Endothelial cell of umbilical vein (primary cell): ENCODE measurements at regions of chr1 and their contacts with region 1.

Region 1: DNA sequence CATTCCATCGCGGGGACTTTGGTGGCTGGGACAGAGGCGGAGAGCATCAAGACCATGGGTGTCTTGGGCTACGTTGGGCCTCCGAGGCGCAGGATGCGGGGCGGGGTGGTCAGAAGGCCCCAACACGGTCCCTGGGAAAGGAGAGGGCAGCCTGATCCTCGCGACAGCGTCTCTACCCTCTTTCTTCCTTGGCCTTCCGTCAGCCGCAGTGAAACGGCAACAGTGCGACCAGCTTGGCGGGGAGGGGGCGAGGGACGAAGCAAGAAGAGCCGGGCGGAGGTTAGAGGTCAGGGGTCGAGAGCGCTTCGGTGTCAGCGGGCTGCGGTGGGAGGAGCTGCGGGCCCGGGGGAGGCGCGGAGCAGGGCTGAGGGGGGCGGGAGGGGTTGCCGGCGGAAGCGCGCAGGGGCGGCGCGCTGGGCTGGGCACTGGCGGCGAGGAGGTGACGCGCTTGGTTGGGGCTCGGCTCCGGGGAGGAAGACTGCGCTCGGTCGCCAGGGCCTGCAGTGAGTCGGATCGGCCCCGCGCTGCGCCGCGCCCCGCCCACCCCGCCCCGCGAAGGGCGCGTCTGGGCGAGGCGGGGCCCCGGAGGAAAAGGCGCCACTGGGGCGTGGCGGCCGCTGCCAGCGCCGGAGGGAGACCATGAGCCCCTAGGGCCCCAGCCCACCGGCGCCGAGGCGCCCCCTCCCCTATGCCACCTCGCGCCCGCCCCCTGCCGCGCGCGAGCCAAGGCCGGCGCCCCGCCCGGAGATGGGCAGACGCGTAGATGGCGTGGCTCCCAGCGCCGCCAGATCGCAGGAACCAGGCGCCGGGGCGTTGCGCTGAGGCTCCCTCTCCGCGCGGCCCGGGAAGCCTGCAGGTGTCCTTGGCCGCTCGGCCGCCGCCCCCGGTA is at the start of gene KCNC4:
- DNase-seq: peak; percentile 81
- H3K4me3 ChIP-seq: peak within 1 kb of the TSS; percentile 43 to 65 (median 61)
- H3K27ac ChIP-seq: no peak within 1 kb of the TSS
- H3K4me1 ChIP-seq: peaks cover 5% of the 10 kb centered on the region
- H3K27me3 ChIP-seq: peaks cover 0 to 6% of the 10 kb centered on the region in 2 experiments
- CTCF ChIP-seq: no peak
- POLR2A ChIP-seq: no peak
- total RNA-seq, gene KCNC4: 12.3 and 22.5 TPM in 2 replicates

Region 2: GRCh38 chr1:110155878-110156522 is 54.0 kb before region 1 on chr1:
- CTCF ChIA-PET with region 1: no interaction called
- POLR2A ChIA-PET with region 1: no interaction called
- dilution Hi-C with region 1: no loop called
- intact Hi-C with region 1: no loop called
- DNase-seq: peak; percentile 56
- H3K4me3 ChIP-seq: no peak overlapping the region
- H3K27ac ChIP-seq: no peak overlapping the region
- H3K4me1 ChIP-seq: no peaks in the 10 kb centered on the region
- H3K27me3 ChIP-seq: peaks cover 12 to 21% of the 10 kb centered on the region in 2 experiments
- CTCF ChIP-seq: no peak
- POLR2A ChIP-seq: no peak

Region 3: GRCh38 chr1:110235834-110236682 is 26.1 kb after region 1 on chr1:
- CTCF ChIA-PET with region 1: interaction called, 22 read pairs
- POLR2A ChIA-PET with region 1: interaction called, 3 read pairs
- dilution Hi-C with region 1: no loop called
- intact Hi-C with region 1: loop called (anchors 1 kb)
- DNase-seq: peak; percentile 86
- H3K4me3 ChIP-seq: no peak overlapping the region
- H3K27ac ChIP-seq: peak overlapping the region; percentile 77
- H3K4me1 ChIP-seq: peaks cover 36% of the 10 kb centered on the region
- H3K27me3 ChIP-seq: no peaks in the 10 kb centered on the region
- CTCF ChIP-seq: no peak
- POLR2A ChIP-seq: no peak

Region 4: DNA sequence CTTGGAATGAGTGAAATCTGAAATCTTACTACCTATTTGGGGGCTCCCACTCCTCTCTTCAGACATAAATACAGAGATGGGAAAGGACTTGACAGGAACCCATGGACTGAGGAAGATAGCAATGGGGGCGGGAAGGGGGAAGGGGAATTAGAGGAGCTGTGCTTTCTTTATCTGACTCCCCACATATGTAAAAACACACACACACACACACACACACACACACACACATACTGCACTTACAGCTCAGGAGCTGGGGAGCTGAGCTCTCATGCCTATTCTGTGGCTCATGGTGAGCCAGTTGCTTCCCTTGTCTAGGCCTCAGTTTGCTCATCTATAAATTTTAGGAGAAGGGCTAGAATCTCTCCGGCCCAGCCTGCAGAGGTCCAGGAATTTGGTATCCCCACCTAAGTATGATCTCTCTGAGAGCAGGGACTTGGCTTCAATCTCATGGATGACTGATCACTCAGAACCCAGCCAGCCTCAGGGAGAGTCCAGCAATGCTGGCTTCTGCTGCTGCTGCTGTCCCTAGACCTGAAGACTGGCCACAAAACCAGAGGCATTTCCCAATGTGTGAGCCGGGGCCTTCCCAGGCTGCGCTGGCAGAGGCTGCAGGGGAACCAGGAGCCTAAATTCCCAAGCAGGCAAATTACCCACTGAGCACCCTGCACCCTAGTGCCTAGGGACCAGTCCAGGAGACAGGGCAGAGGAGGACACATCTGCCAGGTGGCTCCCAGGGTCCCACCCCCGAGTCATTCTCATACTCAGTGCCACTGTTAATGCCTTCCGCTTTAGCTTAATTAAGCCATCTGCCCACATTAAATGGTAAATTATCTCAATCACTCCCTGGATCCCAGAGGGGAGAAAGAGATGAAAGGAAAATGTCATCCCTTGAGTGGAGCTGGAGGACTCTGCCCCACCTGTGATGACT is 71.7 kb after region 1 on chr1:
- CTCF ChIA-PET with region 1: interaction called, 15 read pairs
- POLR2A ChIA-PET with region 1: no interaction called
- dilution Hi-C with region 1: no loop called
- intact Hi-C with region 1: no loop called
- DNase-seq: no peak
- H3K4me3 ChIP-seq: no peak overlapping the region
- H3K27ac ChIP-seq: no peak overlapping the region
- H3K4me1 ChIP-seq: no peaks in the 10 kb centered on the region
- H3K27me3 ChIP-seq: peaks cover 6 to 7% of the 10 kb centered on the region in 2 experiments
- CTCF ChIP-seq: no peak
- POLR2A ChIP-seq: no peak

Region 5: GRCh38 chr1:110319332-110320152 is 109.6 kb after region 1 on chr1:
- CTCF ChIA-PET with region 1: interaction called, 1,577 read pairs
- POLR2A ChIA-PET with region 1: no interaction called
- dilution Hi-C with region 1: no loop called
- intact Hi-C with region 1: no loop called
- DNase-seq: no peak
- H3K4me3 ChIP-seq: no peak overlapping the region
- H3K27ac ChIP-seq: no peak overlapping the region
- H3K4me1 ChIP-seq: no peaks in the 10 kb centered on the region
- H3K27me3 ChIP-seq: no peaks in the 10 kb centered on the region
- CTCF ChIP-seq: no peak
- POLR2A ChIP-seq: no peak

Region 6: DNA sequence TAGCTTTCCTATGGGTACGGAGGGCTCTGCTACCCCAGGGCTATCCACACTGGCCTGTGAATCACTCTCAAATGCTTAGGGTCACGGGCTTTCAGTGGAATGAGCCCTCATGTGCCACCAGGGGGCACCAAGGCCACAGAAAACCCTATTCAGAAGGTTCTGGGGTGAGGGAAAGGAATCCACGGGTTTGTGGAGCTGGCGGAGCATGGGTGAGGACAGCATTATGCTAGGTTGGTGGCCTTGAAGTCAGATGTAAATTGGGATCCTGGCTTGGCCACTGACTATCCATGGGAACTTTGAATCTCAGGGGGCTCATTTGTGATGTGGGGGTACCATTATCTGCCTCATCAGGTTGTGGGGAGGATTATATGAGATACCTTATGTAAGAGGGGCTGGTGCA is 202.6 kb after region 1 on chr1:
- CTCF ChIA-PET with region 1: interaction called, 22 read pairs
- POLR2A ChIA-PET with region 1: no interaction called
- dilution Hi-C with region 1: no loop called
- intact Hi-C with region 1: no loop called
- DNase-seq: peak; percentile 53
- H3K4me3 ChIP-seq: no peak overlapping the region
- H3K27ac ChIP-seq: no peak overlapping the region
- H3K4me1 ChIP-seq: peaks cover 4% of the 10 kb centered on the region
- H3K27me3 ChIP-seq: peaks cover 7 to 8% of the 10 kb centered on the region in 2 experiments
- CTCF ChIP-seq: peak; percentile 74 to 76
- POLR2A ChIP-seq: no peak

Region 7: DNA sequence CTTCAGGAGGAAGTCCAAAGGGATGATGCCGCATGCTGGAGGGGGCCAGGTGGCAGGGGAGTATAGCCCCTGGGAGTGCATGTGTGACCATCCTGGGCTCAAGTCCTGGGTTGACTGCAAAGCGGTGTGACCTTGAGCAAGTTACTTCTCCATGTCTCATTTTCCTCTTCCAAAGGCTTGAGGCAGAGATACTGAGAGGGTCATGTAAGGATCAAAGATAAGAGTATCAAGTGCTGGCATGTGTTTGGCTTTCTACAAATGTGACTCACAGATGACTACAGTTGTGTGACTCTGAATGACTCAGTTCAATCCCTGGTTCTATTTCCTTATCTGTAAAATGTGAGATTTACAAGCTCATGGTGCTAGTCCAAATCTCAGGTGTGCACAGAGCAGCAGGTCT is 267.1 kb after region 1 on chr1:
- CTCF ChIA-PET with region 1: interaction called, 10 read pairs
- POLR2A ChIA-PET with region 1: no interaction called
- dilution Hi-C with region 1: no loop called
- intact Hi-C with region 1: no loop called
- DNase-seq: peak; percentile 62
- H3K4me3 ChIP-seq: no peak overlapping the region
- H3K27ac ChIP-seq: no peak overlapping the region
- H3K4me1 ChIP-seq: peaks cover 13% of the 10 kb centered on the region
- H3K27me3 ChIP-seq: peaks cover 0 to 3% of the 10 kb centered on the region in 2 experiments
- CTCF ChIP-seq: no peak
- POLR2A ChIP-seq: no peak

Region 8: DNA sequence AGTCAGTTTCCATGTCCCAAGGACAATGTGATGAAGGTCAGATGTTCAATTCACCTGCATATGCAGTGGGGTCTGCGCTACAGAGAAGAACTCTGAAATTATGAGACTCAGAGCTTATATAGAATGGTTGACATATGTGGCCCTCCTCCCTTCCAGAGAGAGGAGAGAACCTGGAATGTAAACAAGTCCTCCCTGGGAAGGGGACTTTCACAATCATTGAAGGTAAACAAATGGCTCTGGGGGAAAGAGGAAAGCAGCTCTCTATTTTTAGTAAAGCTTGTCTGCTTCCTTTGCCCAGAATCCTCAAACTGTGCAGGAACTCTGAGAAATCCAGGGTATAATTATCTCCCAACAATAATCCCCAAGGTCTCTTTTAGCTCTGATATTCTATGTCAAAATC is 1207.8 kb after region 1 on chr1:
- CTCF ChIA-PET with region 1: no interaction called
- POLR2A ChIA-PET with region 1: no interaction called
- dilution Hi-C with region 1: no loop called
- intact Hi-C with region 1: no loop called
- DNase-seq: no peak
- H3K4me3 ChIP-seq: no peak overlapping the region
- H3K27ac ChIP-seq: no peak overlapping the region
- H3K4me1 ChIP-seq: no peaks in the 10 kb centered on the region
- H3K27me3 ChIP-seq: peaks cover 3 to 7% of the 10 kb centered on the region in 2 experiments
- CTCF ChIP-seq: no peak
- POLR2A ChIP-seq: no peak